Tibial artery (tissue), 4 donors: ENCODE measurements at regions of chr2 and their contacts with region 1.

Region 1: GRCh38 chr2:101831351-101831865 is 133.9 kb downstream of the MAP4K4 start:
- DNase-seq: peak; percentile 75 to 88
- H3K4me3 ChIP-seq: no peak overlapping the region
- H3K27ac ChIP-seq: peak overlapping the region; percentile 35 to 65
- H3K4me1 ChIP-seq: peaks cover 0 to 59% (median 41%) of the 10 kb centered on the region in 4 donors
- H3K27me3 ChIP-seq: no peaks in the 10 kb centered on the region
- CTCF ChIP-seq: peak; percentile 66 to 76

Region 2: DNA sequence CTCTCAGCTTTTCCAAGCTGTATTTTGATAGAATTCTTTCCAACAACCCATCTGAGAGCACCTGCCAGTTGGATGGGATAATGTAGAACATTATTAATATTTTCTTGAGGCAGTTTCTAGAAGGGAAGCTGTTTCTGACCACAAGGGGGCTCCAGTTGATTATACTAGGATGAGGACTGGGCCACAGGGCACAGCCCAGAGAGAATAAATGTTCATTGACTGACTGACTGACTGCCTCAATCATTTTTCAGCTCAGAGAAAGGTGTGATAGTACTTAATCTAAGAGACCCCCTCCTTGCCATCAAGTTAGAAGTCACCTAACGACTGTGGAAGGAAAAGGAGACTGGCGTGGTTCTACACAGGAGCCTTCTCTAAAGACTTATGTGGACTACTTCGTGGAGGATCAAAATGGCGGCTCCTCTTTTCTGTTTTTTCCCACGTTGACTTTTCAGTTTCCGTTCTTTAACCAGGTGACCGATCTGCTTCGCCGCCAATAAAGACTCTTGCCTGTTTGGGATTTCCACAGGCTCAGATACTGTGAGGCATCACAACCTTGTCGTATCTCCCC is 412.2 kb before region 1 on chr2:
- intact Hi-C with region 1: loop called (anchors 5 kb)
- DNase-seq: peak in 1 of 2 donors; percentile 63
- H3K4me3 ChIP-seq: no peak overlapping the region
- H3K27ac ChIP-seq: no peak overlapping the region
- H3K4me1 ChIP-seq: no peaks in the 10 kb centered on the region
- H3K27me3 ChIP-seq: no peaks in the 10 kb centered on the region
- CTCF ChIP-seq: peak; percentile 61 to 69

Region 3: GRCh38 chr2:101518578-101519492 is 312.6 kb before region 1 on chr2:
- intact Hi-C with region 1: loop called (anchors 5 kb)
- DNase-seq: no peak
- H3K4me3 ChIP-seq: no peak overlapping the region
- H3K27ac ChIP-seq: no peak overlapping the region
- H3K4me1 ChIP-seq: peaks cover 0 to 17% (median 8%) of the 10 kb centered on the region in 4 donors
- H3K27me3 ChIP-seq: no peaks in the 10 kb centered on the region
- CTCF ChIP-seq: peak; percentile 31 to 38